ENCODE measurements at regions of chr16 and their contacts with region 1.

Region 1: GRCh38 chr16:70298988-70299938 is at the start of gene DDX19B:
- DNase-seq: peak; percentile 76 to 89 (median 85)
- H3K4me3 ChIP-seq: peak within 1 kb of the TSS; percentile 65 to 99 (median 85)
- H3K27ac ChIP-seq: peak within 1 kb of the TSS; percentile 64 to 99 (median 92)
- H3K27me3 ChIP-seq: no peaks in the 10 kb centered on the region
- CTCF ChIP-seq: peak in 14 of 56 donors; percentile 2 to 25 (median 16)
- total RNA-seq, gene DDX19B: 13.1 to 33.1 (median 20.6) TPM

Region 2: GRCh38 chr16:70254095-70254964 is 44.9 kb before region 1 on chr16:
- intact Hi-C with region 1: no loop called
- DNase-seq: no peak
- H3K4me3 ChIP-seq: no peak overlapping the region
- H3K27ac ChIP-seq: peak overlapping the region in 2 of 59 donors; percentile 8 to 31
- H3K27me3 ChIP-seq: no peaks in the 10 kb centered on the region
- CTCF ChIP-seq: peak in 1 of 56 donors; percentile 3

Region 3: DNA sequence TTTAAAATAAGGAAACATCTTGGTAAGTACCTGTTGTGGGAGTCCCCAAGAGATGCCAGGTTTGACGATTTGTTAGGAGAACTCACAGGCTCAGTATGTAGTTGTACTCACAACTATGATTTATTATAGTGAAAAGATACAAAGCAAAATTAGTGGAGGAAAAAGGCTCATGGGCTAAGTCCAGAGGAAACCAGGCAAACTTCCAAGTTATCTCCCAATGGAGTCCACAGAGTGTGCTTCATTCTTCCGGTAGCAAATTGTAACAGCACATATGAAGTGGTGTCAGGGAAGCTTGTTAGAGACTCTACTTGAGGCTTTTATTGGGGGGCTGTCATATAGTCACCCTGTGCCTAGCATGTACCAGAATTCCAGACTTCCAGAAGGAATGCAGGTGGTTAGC is 49.7 kb after region 1 on chr16:
- intact Hi-C with region 1: loop called in 1 of 2 experiments (anchors 2 kb)
- DNase-seq: no peak
- H3K4me3 ChIP-seq: no peak overlapping the region
- H3K27ac ChIP-seq: no peak overlapping the region
- H3K27me3 ChIP-seq: no peaks in the 10 kb centered on the region
- CTCF ChIP-seq: no peak

Region 4: DNA sequence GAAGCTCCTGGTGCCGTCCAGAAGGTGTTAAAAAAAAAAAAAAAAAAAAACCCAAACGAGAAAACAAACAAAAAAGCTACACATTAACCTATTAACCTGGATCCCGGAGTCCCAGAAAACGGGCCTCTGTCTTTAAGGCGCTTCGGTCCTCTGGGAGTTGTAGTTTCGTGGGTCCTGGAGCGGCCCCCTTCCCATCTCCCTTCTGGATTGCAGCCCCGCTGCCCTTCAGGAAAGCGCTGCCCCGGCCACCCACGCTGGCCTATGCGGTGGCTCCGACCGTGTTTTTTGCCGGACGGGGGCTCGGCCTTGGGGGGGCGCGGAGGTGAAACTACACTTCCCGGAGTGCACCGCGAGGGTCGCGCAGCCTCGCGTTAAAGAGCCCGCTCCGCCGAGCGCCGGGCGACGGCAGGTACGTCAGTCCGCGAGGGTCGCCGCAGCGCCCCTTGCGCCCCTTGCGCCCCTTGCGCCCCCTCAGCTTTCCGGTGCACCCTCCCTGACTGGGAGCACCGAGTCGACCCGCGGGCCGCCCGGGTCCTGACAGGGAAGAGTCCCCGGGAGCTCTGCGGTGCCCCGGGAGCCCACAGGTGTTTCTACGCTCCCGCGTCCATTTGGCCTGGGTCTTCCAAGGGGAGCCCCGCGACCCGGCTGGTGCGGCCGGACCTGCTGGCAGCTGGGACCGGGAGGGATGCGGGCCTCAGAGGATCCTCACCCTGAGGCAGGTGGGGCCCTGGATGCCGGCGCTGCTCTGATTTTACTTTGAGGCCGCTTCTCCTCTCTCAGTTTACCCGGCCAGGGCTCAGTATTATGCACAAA is 155.2 kb after region 1 on chr16 and contains the start of gene FCSK:
- intact Hi-C with region 1: no loop called
- DNase-seq: peak in 8 of 10 donors; percentile 53 to 81 (median 70)
- H3K4me3 ChIP-seq: peak within 1 kb of the TSS; percentile 75 to 100 (median 98)
- H3K27ac ChIP-seq: peak within 1 kb of the TSS; percentile 77 to 100 (median 97)
- H3K27me3 ChIP-seq: peaks cover 0 to 7% (median 0%) of the 10 kb centered on the region in 45 donors
- CTCF ChIP-seq: peak in 22 of 56 donors; percentile 1 to 47 (median 22)
- total RNA-seq, gene FCSK: 15.7 to 38.7 (median 23.8) TPM

Measured in dorsolateral prefrontal cortex (tissue), 120 donors.